Mammary epithelial cell (primary cell): ENCODE measurements at regions of chr13 and their contacts with region 1.

Region 1: DNA sequence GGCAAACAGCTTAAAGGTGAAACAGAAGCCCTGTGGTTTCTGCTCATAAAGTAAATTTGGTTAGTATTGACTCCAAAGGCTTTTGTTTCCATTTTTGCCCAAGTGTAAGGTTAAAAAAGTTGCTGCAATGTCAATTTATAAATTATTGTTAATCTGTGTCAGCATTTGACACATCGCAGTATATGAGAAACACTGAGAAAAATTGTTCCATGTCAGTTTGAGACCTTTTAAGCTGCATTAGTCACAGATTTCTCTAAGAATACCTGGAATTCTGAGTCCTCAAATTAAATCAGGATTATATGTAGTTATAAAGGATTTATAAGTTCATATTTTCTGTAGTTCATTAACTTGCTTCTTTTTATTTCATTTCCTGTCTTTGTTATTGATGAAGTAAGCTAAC is 78.8 kb downstream of the FGF14 start:
- DNase-seq: no peak
- H3K4me3 ChIP-seq: no peak overlapping the region
- H3K27ac ChIP-seq: no peak overlapping the region
- H3K4me1 ChIP-seq: no peaks in the 10 kb centered on the region
- H3K27me3 ChIP-seq: no peaks in the 10 kb centered on the region
- CTCF ChIP-seq: no peak

Region 2: GRCh38 chr13:102240110-102240509 is 82.9 kb before region 1 on chr13:
- CTCF ChIA-PET with region 1: no interaction called
- dilution Hi-C with region 1: no loop called
- in situ Hi-C with region 1: no loop called
- intact Hi-C with region 1: no loop called
- DNase-seq: no peak
- H3K4me3 ChIP-seq: no peak overlapping the region
- H3K27ac ChIP-seq: no peak overlapping the region
- H3K4me1 ChIP-seq: no peaks in the 10 kb centered on the region
- H3K27me3 ChIP-seq: no peaks in the 10 kb centered on the region
- CTCF ChIP-seq: no peak

Region 3: DNA sequence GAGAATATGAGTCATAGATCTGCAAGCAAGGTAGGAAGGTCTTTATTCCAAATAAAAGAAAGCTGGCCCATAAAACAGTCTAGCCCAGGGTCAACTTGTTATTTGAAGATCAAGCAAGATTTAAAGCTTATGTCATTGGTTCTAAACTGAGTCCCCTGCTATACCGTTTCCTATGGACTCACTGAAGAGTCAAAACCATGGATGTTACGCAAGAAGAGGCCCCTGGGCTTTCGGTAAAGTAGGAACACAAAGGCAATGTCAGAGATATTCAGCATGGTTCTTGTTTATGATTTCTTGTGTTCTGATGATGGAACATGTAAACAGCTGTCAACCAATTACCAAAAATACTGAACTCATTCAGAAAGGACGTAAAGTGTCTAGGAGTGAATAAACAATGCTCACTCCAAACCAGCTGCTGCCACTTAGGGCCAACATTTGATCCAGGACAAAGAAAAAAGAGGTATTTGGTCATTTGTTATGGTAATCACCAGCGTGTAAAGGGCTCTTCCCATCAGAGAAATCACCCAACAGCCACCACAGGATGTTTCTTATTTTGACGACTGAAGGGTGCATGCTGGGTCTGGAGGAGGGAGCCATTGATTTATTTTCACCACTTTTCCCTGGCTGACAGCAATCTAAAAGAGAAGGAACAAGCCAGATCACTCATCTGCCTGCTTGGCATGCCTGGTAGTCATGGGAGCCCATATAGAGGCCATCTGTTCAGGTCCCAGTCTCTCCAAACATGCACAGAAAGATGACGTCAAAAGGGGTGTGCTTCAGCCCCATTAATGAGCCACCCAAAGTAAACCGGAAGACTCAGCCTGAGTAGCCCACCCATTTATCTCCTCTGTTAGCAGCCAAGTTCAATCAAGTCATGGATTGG is 10.5 kb after region 1 on chr13:
- CTCF ChIA-PET with region 1: interaction called, 10 read pairs
- dilution Hi-C with region 1: no loop called
- in situ Hi-C with region 1: no loop called
- intact Hi-C with region 1: no loop called
- DNase-seq: no peak
- H3K4me3 ChIP-seq: no peak overlapping the region
- H3K27ac ChIP-seq: no peak overlapping the region
- H3K4me1 ChIP-seq: no peaks in the 10 kb centered on the region
- H3K27me3 ChIP-seq: no peaks in the 10 kb centered on the region
- CTCF ChIP-seq: no peak